ENCODE measurements at regions of chr5 and their contacts with region 1.

Region 1: GRCh38 chr5:173016621-173017047 is 33.1 kb downstream of the ATP6V0E1 start:
- DNase-seq: no peak
- ATAC-seq: no peak
- H3K4me3 ChIP-seq: no peak overlapping the region
- H3K4me3 Mint-ChIP-seq: no peak overlapping the region
- H3K27ac ChIP-seq: peak overlapping the region in 1 of 2 donors; percentile 30
- H3K27ac Mint-ChIP-seq: peak overlapping the region; percentile 76
- H3K4me1 ChIP-seq: peaks cover 0 to 3% of the 10 kb centered on the region in 2 donors
- H3K4me1 Mint-ChIP-seq: peaks cover 34% of the 10 kb centered on the region
- H3K27me3 ChIP-seq: no peaks in the 10 kb centered on the region
- H3K27me3 Mint-ChIP-seq: no peaks in the 10 kb centered on the region
- CTCF ChIP-seq: no peak

Region 2: GRCh38 chr5:172886974-172887501 is 129.6 kb before region 1 on chr5:
- CTCF ChIA-PET with region 1: no interaction called
- POLR2A ChIA-PET with region 1: no interaction called
- intact Hi-C with region 1: no loop called
- DNase-seq: no peak
- ATAC-seq: no peak
- H3K4me3 ChIP-seq: no peak overlapping the region
- H3K4me3 Mint-ChIP-seq: no peak overlapping the region
- H3K27ac ChIP-seq: no peak overlapping the region
- H3K27ac Mint-ChIP-seq: no peak overlapping the region
- H3K4me1 ChIP-seq: peaks cover 0 to under 1% of the 10 kb centered on the region in 2 donors
- H3K4me1 Mint-ChIP-seq: peaks cover 15% of the 10 kb centered on the region
- H3K27me3 ChIP-seq: no peaks in the 10 kb centered on the region
- H3K27me3 Mint-ChIP-seq: no peaks in the 10 kb centered on the region
- CTCF ChIP-seq: no peak

Region 3: GRCh38 chr5:173029499-173029921 is 12.9 kb after region 1 on chr5:
- CTCF ChIA-PET with region 1: interaction called, 3 read pairs
- POLR2A ChIA-PET with region 1: interaction called, 12 read pairs
- intact Hi-C with region 1: no loop called
- DNase-seq: peak; percentile 30
- ATAC-seq: no peak
- H3K4me3 ChIP-seq: no peak overlapping the region
- H3K4me3 Mint-ChIP-seq: no peak overlapping the region
- H3K27ac ChIP-seq: peak overlapping the region; percentile 24 to 79
- H3K27ac Mint-ChIP-seq: no peak overlapping the region
- H3K4me1 ChIP-seq: peaks cover 27 to 34% of the 10 kb centered on the region in 2 donors
- H3K4me1 Mint-ChIP-seq: peaks cover 16% of the 10 kb centered on the region
- H3K27me3 ChIP-seq: no peaks in the 10 kb centered on the region
- H3K27me3 Mint-ChIP-seq: no peaks in the 10 kb centered on the region
- CTCF ChIP-seq: no peak

Region 4: GRCh38 chr5:173123416-173123815 is 106.8 kb after region 1 on chr5:
- CTCF ChIA-PET with region 1: no interaction called
- POLR2A ChIA-PET with region 1: interaction called, 16 read pairs
- intact Hi-C with region 1: no loop called
- DNase-seq: no peak
- ATAC-seq: no peak
- H3K4me3 ChIP-seq: no peak overlapping the region
- H3K4me3 Mint-ChIP-seq: no peak overlapping the region
- H3K27ac ChIP-seq: no peak overlapping the region
- H3K27ac Mint-ChIP-seq: no peak overlapping the region
- H3K4me1 ChIP-seq: no peaks in the 10 kb centered on the region
- H3K4me1 Mint-ChIP-seq: no peaks in the 10 kb centered on the region
- H3K27me3 ChIP-seq: no peaks in the 10 kb centered on the region
- H3K27me3 Mint-ChIP-seq: no peaks in the 10 kb centered on the region
- CTCF ChIP-seq: no peak

Measured in B cell (primary cell).